ENCODE measurements at regions of chr12 and their contacts with region 1.

Region 1: DNA sequence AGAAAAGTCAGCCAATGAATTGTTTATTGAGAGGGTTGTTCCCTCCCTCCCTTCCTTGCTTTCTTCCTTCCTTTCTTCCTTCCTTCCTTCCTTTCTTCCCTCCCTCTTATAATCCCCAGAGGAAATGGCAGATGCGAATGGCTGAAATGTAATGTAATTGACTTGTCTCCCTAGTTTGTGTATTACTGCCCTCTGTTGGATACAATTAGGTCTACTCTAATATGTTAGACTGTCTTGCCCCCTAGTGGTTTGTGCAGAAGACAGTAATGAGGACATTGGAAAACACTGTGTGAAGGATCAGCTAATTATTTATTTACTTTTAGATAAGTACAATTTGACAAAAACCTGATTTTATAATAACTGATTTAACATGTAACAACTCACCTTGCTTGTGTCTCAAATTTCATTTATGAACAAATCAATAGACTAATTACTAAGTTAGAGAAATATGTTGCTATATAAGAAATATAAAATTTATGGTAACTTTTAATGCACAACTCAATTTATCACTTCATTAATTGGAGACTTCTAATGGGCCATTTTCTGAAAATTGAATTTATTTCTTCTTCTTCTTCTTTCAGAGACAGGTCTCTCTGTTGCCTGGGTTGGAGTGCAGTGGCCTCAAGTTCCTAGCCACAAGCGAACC is 229.8 kb upstream of the LRIG3 start:
- DNase-seq: no peak
- H3K4me3 ChIP-seq: no peak overlapping the region
- H3K27ac ChIP-seq: no peak overlapping the region
- H3K4me1 ChIP-seq: no peaks in the 10 kb centered on the region
- H3K27me3 ChIP-seq: no peaks in the 10 kb centered on the region
- CTCF ChIP-seq: peak; percentile 82 to 97 (median 93)
- EP300 ChIP-seq: no peak
- POLR2A ChIP-seq: no peak

Region 2: DNA sequence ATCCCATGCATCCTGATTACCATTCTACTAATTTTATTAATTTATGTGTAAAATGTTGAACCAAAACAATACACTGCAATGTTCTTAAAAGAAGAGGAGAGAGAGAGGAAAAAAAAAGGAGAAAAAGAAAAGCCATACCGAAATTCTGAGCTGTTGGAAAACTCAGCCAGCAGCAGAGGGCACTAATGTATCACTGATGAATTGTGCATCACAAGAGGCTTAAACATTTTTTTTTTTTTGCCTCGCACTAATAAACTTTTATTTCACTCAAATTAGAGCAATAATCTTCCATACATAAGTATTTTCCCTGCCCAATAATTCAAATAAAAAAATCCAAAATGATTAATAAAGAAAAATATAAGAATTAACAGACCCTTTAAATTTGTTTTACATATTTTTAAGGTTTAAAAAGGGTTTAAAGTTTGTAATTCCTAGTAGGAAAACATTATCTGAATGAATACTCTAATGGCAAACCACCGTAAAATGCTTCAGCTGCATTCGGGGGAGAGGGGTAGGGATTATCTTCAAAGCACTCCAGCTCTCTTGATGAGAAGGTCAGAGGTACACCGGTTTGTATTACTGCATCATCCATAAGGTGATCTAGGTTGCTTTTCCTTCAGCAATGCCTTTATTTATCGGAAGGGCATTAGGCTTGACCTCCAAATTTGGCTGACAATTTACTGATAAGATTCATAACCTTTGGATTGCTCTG is 1166.8 kb before region 1 on chr12:
- in situ Hi-C with region 1: loop called in 2 of 4 experiments (anchors 25 kb)
- intact Hi-C with region 1: no loop called
- DNase-seq: peak; percentile 30
- H3K4me3 ChIP-seq: no peak overlapping the region
- H3K27ac ChIP-seq: no peak overlapping the region
- H3K4me1 ChIP-seq: no peaks in the 10 kb centered on the region
- H3K27me3 ChIP-seq: no peaks in the 10 kb centered on the region
- CTCF ChIP-seq: peak; percentile 48 to 65 (median 56)
- EP300 ChIP-seq: no peak
- POLR2A ChIP-seq: no peak

Region 3: DNA sequence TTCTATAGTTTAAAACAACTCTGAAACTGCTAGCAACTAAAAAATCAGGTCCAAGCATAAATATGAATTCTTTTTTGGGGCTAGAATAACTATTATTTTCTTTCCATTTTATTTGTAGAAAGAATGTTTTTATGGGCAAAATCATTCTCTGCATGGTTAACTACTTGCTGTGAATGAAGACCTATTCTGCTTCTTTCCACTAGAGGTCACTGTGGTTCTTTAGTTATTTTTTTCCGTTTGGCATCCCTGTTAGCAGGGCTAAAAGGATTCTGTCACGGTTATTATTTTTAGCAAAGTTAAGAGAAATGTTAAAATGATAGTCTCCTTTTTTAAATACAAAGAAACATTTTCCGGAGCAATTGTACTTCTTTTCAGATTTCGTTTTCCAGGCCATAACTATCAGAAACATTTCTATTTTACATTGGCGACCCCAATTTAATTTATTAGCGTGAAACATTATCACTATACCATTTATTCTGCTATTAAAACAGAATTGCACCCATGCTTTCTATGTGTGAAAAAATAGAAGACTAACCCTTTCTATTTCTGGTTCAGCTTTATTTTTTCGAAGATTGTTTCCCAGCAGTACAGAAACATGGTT is 804.0 kb before region 1 on chr12:
- in situ Hi-C with region 1: loop called (anchors 10 to 25 kb)
- intact Hi-C with region 1: no loop called
- DNase-seq: no peak
- H3K4me3 ChIP-seq: no peak overlapping the region
- H3K27ac ChIP-seq: no peak overlapping the region
- H3K4me1 ChIP-seq: peaks cover 0 to 11% (median 5%) of the 10 kb centered on the region in 4 donors
- H3K27me3 ChIP-seq: no peaks in the 10 kb centered on the region
- CTCF ChIP-seq: peak; percentile 68 to 89 (median 77)
- EP300 ChIP-seq: no peak
- POLR2A ChIP-seq: no peak

Region 4: GRCh38 chr12:58540480-58541299 is 609.4 kb before region 1 on chr12:
- in situ Hi-C with region 1: loop called in 3 of 4 experiments (anchors 25 kb)
- intact Hi-C with region 1: no loop called
- DNase-seq: peak; percentile 61
- H3K4me3 ChIP-seq: no peak overlapping the region
- H3K27ac ChIP-seq: peak overlapping the region in 1 of 4 donors; percentile 4
- H3K4me1 ChIP-seq: peaks cover 0 to 4% (median 0%) of the 10 kb centered on the region in 4 donors
- H3K27me3 ChIP-seq: no peaks in the 10 kb centered on the region
- CTCF ChIP-seq: peak; percentile 57 to 64 (median 60)
- EP300 ChIP-seq: no peak
- POLR2A ChIP-seq: no peak

Measured in transverse colon (tissue), 4 donors.